Activated T-helper 2 cell treated with anti-CD3 and anti-CD28 coated beads, Interferon-gamma antibody, Interleukin-2, Interleukin-4, amounts not matched to agents 10 μg/mL and 5 μg/mL and 100 μg/mL, durations not matched to agents 14 hours and 24 hours and 36 hours (primary cell): ENCODE measurements at regions of chr7 and their contacts with region 1.

Region 1: GRCh38 chr7:66114793-66115649 is at the start of gene CRCP:
- DNase-seq: peak; percentile 78
- H3K4me3 Mint-ChIP-seq: peak within 1 kb of the TSS; percentile 95
- H3K27ac Mint-ChIP-seq: peak within 1 kb of the TSS; percentile 97
- H3K4me1 Mint-ChIP-seq: peaks cover 31% of the 10 kb centered on the region
- H3K27me3 Mint-ChIP-seq: no peaks in the 10 kb centered on the region
- total RNA-seq, gene CRCP: 32.8 and 37.9 TPM in 2 replicates

Region 2: DNA sequence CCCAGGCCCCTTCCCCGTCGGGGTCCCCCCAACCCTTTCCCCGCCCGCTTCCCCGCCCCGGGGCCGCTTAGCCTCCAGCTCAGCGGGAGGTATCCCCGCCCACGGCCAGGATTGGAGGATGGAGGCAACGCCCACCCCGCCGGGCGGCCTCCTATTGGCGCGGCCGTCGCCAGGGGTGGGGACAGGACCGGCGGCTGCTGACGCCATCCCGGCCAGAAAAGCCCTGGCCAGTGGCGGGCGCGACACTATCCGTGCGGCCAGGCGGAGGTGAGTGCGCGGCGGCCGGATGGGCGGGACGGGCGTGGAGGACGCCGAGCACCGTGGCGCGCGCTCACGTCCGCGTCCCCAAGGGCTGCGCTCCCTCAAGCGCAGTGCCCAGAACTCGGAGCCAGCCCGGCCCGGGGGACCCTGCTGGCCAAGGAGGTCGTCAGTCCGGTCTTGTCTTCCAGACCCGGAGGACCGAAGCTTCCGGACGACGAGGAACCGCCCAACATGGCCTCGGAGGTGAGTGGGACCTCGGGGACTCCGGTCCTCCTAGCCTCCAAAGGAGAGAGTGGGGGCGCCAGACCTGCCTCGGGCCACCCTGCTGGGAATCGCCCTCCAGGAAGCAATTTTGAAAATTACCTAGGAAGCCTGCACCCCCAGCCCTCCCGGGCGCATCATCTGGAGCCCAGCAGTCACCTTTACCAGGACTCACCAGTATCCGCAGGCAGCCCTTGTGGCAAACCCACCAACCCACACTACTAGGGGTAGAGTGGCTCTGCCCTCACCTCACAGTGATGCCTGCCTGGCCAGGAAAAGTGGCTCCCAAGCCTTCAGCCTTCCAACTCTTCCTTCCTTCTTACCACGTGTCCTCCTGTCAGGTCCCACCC is 39.2 kb before region 1 on chr7 and contains the start of gene ASL:
- intact Hi-C with region 1: loop called (anchors 1 kb)
- DNase-seq: peak; percentile 89
- H3K4me3 Mint-ChIP-seq: peak within 1 kb of the TSS; percentile 85
- H3K27ac Mint-ChIP-seq: peak within 1 kb of the TSS; percentile 44
- H3K4me1 Mint-ChIP-seq: peaks cover 14% of the 10 kb centered on the region
- H3K27me3 Mint-ChIP-seq: peaks cover 3% of the 10 kb centered on the region
- total RNA-seq, gene ASL: 48.0 and 49.1 TPM in 2 replicates

Region 3: DNA sequence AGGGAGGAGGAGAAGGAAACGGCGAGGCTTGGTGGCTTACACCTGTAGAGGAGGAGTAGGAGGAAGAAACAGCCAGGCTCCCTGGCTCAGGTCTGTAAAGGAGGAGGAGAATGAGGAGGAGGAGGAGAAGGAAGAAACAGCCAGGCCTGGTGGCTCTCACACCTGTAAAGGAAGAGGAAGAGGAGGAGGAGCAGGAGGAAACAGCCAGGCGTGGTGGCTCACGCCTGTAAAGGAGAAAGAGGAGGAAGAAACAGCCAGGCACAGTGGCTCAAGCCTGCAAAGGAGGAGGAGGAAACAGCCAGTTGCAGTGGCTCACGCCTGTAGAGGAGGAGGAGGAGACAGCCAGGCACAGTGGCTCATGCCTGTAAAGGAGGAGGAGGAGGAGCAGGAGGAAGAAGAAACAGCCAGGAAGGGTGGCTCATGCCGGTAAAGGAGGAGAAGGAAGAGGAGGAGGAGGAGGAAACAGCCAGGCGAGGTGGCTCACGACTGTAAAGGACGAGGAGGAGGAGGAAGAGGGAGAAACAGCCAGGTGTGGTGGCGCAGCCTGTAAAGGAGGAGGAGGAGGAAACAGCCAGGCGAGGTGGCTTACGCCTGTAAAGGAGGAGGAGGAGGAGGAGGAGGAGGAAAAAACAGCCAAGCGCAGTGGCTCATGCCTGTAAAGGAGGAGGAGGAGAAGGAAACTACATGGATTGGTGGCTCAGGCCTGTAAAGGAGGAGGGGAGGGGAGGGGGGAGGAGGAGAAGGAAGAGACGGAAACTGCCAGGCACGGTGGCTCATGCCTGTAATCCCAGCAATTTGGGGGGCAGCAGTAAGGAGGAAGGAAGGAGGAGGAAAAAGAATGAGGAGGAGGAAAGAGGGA is 15.2 kb before region 1 on chr7:
- intact Hi-C with region 1: loop called (anchors 2 kb)
- DNase-seq: peak; percentile 14
- H3K4me3 Mint-ChIP-seq: peak overlapping the region; percentile 78
- H3K27ac Mint-ChIP-seq: peak overlapping the region; percentile 81
- H3K4me1 Mint-ChIP-seq: peaks cover 7% of the 10 kb centered on the region
- H3K27me3 Mint-ChIP-seq: no peaks in the 10 kb centered on the region

Region 4: GRCh38 chr7:66125052-66125708 is 10.2 kb after region 1 on chr7:
- intact Hi-C with region 1: loop called (anchors 2 kb)
- DNase-seq: no peak
- H3K4me3 Mint-ChIP-seq: peak overlapping the region; percentile 15
- H3K27ac Mint-ChIP-seq: peak overlapping the region; percentile 65
- H3K4me1 Mint-ChIP-seq: peaks cover 31% of the 10 kb centered on the region
- H3K27me3 Mint-ChIP-seq: no peaks in the 10 kb centered on the region

Region 5: GRCh38 chr7:66296001-66296521 is 181.0 kb after region 1 on chr7:
- intact Hi-C with region 1: no loop called
- DNase-seq: no peak
- H3K4me3 Mint-ChIP-seq: no peak overlapping the region
- H3K27ac Mint-ChIP-seq: no peak overlapping the region
- H3K4me1 Mint-ChIP-seq: no peaks in the 10 kb centered on the region
- H3K27me3 Mint-ChIP-seq: no peaks in the 10 kb centered on the region